ENCODE measurements at regions of chr9 and their contacts with region 1.

Region 1: GRCh38 chr9:35563791-35564197 is 41.3 kb upstream of the TESK1 start:
- DNase-seq: peak; percentile 71 to 85
- ATAC-seq: peak; percentile 52 to 64 (median 58)
- H3K4me3 ChIP-seq: peak overlapping the region; percentile 58
- H3K27ac ChIP-seq: peak overlapping the region; percentile 90
- H3K4me1 ChIP-seq: peaks cover 82% of the 10 kb centered on the region
- H3K27me3 ChIP-seq: no peaks in the 10 kb centered on the region
- CTCF ChIP-seq: no peak

Region 2: DNA sequence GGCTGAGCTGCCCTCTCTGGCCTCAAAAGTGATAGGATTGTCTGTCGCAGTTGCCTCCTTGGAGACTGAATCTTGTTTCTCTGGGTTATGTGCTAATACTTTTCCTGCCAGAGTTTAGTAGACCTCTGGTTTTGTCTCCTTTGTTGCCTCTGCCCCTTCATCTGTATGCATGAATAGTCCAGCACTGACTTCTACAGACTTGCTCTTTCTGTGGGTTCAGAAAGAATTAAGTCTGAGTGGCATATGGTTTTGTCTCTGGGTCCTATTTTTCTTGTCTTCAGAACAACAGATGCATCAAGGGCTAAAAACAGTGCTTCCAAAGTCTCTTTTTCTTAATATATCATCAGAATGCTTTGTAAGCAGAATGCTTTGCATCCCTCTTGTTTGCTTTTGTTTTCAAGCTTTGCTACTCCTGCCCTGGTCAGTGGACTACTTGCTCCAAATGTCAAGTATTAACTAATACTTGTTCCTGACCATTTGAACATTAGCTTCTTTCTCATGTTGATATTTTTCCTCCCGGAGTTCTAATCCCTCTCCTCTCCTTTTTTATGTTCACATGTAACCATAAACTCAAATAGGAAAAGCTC is 270.3 kb before region 1 on chr9:
- intact Hi-C with region 1: loop called in 1 of 2 experiments (anchors 10 kb)
- DNase-seq: no peak
- ATAC-seq: no peak
- H3K4me3 ChIP-seq: no peak overlapping the region
- H3K27ac ChIP-seq: no peak overlapping the region
- H3K4me1 ChIP-seq: peaks cover 29% of the 10 kb centered on the region
- H3K27me3 ChIP-seq: no peaks in the 10 kb centered on the region
- CTCF ChIP-seq: no peak

Region 3: GRCh38 chr9:35518226-35518821 is 45.5 kb before region 1 on chr9:
- intact Hi-C with region 1: loop called in 1 of 2 experiments (anchors 5 kb)
- DNase-seq: peak; percentile 37 to 57
- ATAC-seq: peak; percentile 51 to 77 (median 70)
- H3K4me3 ChIP-seq: peak overlapping the region; percentile 9
- H3K27ac ChIP-seq: peak overlapping the region; percentile 92
- H3K4me1 ChIP-seq: peaks cover 95% of the 10 kb centered on the region
- H3K27me3 ChIP-seq: no peaks in the 10 kb centered on the region
- CTCF ChIP-seq: no peak